ENCODE measurements at regions of chr18 and their contacts with region 1.

Region 1: DNA sequence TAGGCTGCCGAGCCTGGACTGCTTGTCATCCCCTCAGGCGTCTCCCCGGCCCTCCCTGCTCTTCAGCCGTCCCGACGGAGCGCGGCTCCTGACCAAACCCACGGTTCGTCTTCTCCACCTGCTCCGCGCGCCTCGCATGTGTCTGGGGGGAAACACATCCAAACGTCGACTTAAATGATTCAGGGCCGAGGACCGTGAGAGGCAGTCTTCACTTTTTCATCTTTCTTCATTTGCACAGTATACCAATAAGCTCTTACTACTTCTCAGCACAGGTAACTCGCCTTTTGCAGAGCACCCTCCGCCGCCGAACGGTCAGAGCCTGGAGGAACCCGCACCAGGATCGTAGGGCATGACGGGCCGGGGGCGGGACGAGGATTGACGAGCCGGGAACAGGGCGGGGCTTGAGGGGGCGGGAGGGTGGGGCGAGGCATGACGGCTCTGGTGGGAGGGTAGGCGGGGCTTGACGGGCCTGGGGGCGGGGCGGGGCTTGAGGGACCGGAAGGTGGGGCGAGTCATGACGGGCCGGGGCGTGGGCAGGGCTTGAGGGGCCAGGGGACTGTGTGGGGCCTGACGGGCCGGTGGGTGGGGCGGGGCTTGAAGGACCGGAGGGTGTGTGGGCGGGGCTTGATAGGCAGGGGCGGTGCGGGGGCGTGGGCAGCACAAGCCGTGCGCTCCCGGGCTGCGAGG is at the start of gene SEH1L:
- DNase-seq: peak; percentile 93 to 99
- H3K4me3 ChIP-seq: peak within 1 kb of the TSS; percentile 78 to 87
- H3K27ac ChIP-seq: peak within 1 kb of the TSS; percentile 98
- H3K4me1 ChIP-seq: peaks cover 5 to 26% of the 10 kb centered on the region in 2 donors
- H3K27me3 ChIP-seq: no peaks in the 10 kb centered on the region
- CTCF ChIP-seq: no peak
- total RNA-seq, gene SEH1L: 16.3 TPM

Region 2: GRCh38 chr18:12408247-12408869 is 539.1 kb before region 1 on chr18:
- intact Hi-C with region 1: loop called (anchors 5 kb)
- DNase-seq: no peak
- H3K4me3 ChIP-seq: peak overlapping the region; percentile 80 to 93
- H3K27ac ChIP-seq: peak overlapping the region; percentile 84 to 87
- H3K4me1 ChIP-seq: peaks cover 0 to 12% of the 10 kb centered on the region in 2 donors
- H3K27me3 ChIP-seq: no peaks in the 10 kb centered on the region
- CTCF ChIP-seq: no peak

Region 3: DNA sequence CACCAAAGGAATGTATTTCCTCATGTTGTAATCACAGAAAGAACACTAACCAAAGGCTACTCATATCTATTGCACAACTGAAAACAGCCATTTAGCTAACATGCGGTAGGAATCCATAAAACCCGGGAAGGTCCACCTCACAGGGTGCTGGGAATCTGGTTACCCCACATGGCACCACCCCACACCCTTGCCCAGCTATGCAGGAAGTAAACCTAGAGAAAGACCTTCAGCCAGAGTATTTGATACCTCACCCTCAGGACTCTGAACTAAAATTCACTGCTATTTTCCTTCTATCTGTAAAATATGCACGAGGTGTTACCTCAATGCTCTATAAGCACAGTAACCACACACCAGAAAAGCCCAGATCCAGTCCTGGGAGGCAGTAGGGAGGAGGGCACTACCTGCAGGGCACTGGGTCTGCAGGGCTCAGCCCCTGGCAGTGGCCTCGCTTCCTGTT is 109.3 kb before region 1 on chr18:
- intact Hi-C with region 1: loop called (anchors 5 kb)
- DNase-seq: peak in 1 of 2 donors; percentile 83
- H3K4me3 ChIP-seq: peak overlapping the region in 1 of 2 donors; percentile 29
- H3K27ac ChIP-seq: peak overlapping the region; percentile 54 to 65
- H3K4me1 ChIP-seq: peaks cover 4 to 7% of the 10 kb centered on the region in 2 donors
- H3K27me3 ChIP-seq: no peaks in the 10 kb centered on the region
- CTCF ChIP-seq: no peak

Region 4: DNA sequence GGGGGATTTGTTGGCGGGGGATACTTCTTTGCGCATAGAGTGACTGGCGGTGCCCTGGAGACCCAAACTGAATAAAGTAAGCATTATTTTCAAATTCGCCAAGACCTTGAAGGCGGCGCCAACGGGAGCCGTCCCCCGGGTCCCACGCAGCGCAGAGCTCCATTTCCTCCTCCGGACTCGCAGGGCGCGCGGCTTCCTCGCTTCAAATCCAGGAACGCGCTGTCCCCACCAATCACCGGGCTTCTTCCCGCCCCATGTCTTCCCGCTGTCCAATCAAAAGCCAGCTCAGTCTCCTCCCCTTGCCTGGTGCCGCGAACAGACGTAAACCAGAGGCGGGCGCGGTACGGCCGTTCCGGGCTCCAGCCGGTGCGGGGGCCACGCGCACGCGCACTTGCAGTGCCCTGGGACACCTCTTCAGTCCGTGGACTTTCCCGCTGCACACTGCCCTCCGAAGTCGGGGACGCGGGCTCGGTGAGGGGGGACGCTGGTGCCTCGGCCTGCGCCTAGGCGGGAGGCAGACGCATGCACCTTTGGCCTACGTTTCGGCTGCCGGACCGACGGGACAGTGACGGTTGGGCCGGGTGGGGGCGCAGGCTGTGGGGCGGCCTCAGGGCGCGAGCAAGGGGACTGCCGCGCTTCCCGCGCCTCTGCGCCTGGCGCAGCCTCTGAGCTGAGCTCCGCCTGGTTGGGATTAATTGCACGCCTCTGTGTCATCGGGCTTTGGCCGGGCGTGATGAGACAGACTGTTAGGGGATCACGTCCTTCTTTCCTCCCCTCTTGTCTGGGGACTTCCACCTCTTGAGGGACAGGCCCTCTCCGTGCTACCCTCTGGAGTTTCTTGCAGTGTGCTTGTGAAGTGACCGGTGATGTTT is 43.7 kb after region 1 on chr18 and contains the start of gene CEP192:
- intact Hi-C with region 1: loop called (anchors 1 kb)
- DNase-seq: peak; percentile 92 to 99
- H3K4me3 ChIP-seq: peak within 1 kb of the TSS; percentile 61 to 87
- H3K27ac ChIP-seq: peak within 1 kb of the TSS; percentile 73 to 80
- H3K4me1 ChIP-seq: peaks cover 0 to 9% of the 10 kb centered on the region in 2 donors
- H3K27me3 ChIP-seq: no peaks in the 10 kb centered on the region
- CTCF ChIP-seq: no peak
- total RNA-seq, gene CEP192: 3.1 TPM

Region 5: DNA sequence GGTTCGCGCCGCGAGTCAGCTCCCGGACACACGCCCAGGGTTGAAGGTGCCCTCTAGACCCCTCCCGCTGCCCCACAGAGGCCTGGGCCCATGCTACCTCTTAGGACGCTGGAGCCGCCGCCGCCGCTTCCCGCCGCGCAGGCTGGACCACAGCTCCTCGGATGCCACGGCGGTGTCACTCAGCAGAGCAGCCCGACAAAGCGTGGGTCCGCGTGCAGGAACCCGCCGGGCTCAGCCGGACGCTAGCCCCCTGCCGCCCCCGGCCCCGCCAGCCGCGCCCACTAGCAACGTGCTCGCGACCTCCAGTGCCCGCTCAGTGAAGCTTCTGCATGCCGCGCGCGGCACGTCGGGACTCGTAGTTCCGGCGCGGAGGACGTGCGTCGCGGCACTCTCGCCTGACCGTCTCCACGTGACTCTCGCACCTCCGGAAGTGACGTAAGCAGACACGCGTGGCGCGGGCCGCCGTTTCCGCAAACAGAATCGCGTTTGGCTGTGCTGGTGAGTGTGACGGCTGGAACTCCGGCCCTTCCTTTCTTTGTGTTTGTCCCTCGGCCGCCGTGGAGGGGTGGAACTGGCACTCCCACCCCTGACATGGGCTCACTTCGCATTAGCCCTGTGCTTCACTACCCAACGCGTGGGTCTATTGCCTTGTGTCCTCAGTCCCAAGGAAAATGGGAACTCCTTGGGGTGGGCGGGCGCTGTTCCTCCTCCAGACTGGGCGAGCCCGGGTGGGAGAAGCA is 778.9 kb after region 1 on chr18 and contains the starts of genes FAM210A and RNMT:
- intact Hi-C with region 1: loop called (anchors 2 kb)
- DNase-seq: peak; percentile 87 to 97
- H3K4me3 ChIP-seq: peak within 1 kb of the TSS; percentile 79 to 89
- H3K27ac ChIP-seq: peak within 1 kb of the TSS; percentile 95 to 96
- H3K4me1 ChIP-seq: peaks cover 0 to 13% of the 10 kb centered on the region in 2 donors
- H3K27me3 ChIP-seq: no peaks in the 10 kb centered on the region
- CTCF ChIP-seq: peak in 1 of 3 experiments; percentile 35
- total RNA-seq, gene FAM210A: 2.1 TPM
- total RNA-seq, gene RNMT: 6.4 TPM

Measured in ascending aorta (tissue), 2 donors.